Activated T-helper 1 cell treated with anti-CD3 and anti-CD28 coated beads, Interleukin-12 subunit alpha, Interleukin-12 subunit beta, Interleukin-2, Interleukin-4 antibody, amounts not matched to agents 30 ng/mL and 10 ng/mL and 1 ng/mL, durations not matched to agents 14 hours and 24 hours and 36 hours (primary cell): ENCODE measurements at regions of chr17 and their contacts with region 1.

Region 1: GRCh38 chr17:82915757-82916027 is 75.9 kb upstream of the ZNF750 start:
- DNase-seq: no peak
- H3K4me3 Mint-ChIP-seq: no peak overlapping the region
- H3K27ac Mint-ChIP-seq: no peak overlapping the region
- H3K4me1 Mint-ChIP-seq: peaks cover 5% of the 10 kb centered on the region
- H3K27me3 Mint-ChIP-seq: no peaks in the 10 kb centered on the region

Region 2: GRCh38 chr17:82781894-82782274 is 133.8 kb before region 1 on chr17:
- intact Hi-C with region 1: loop called (anchors 1 kb)
- DNase-seq: peak; percentile 80
- H3K4me3 Mint-ChIP-seq: no peak overlapping the region
- H3K27ac Mint-ChIP-seq: no peak overlapping the region
- H3K4me1 Mint-ChIP-seq: peaks cover 7% of the 10 kb centered on the region
- H3K27me3 Mint-ChIP-seq: no peaks in the 10 kb centered on the region

Region 3: GRCh38 chr17:82881900-82882714 is 33.6 kb before region 1 on chr17:
- intact Hi-C with region 1: no loop called
- DNase-seq: no peak
- H3K4me3 Mint-ChIP-seq: peak overlapping the region; percentile 75
- H3K27ac Mint-ChIP-seq: peak overlapping the region; percentile 89
- H3K4me1 Mint-ChIP-seq: peaks cover 85% of the 10 kb centered on the region
- H3K27me3 Mint-ChIP-seq: no peaks in the 10 kb centered on the region